ENCODE measurements at regions of chr11 and their contacts with region 1.

Region 1: GRCh38 chr11:38510041-38510440 is 1912.0 kb upstream of the RAG2 start:
- DNase-seq: no peak
- H3K4me3 ChIP-seq: no peak overlapping the region
- H3K27ac ChIP-seq: no peak overlapping the region
- H3K4me1 ChIP-seq: no peaks in the 10 kb centered on the region
- H3K27me3 ChIP-seq: no peaks in the 10 kb centered on the region
- CTCF ChIP-seq: no peak
- POLR2A ChIP-seq: no peak

Region 2: DNA sequence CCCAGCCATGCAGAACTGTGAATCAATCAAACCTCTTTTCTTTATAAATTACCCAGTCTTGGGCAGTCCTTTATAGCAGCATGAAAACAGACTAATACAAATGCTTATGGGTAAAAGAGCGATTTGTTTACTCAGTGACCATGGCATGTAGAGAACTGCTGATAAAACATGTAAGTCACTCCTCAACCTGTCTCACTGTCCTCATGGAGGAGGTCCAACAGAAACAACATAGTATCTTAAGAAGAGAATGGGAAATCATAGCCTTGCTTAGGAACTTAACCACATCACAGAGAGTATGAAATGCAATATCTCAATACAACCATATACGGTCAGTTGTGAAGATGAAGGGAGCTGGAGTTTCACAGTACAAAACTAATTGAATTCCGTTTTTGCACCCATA is 178.0 kb before region 1 on chr11:
- intact Hi-C with region 1: no loop called
- DNase-seq: no peak
- H3K4me3 ChIP-seq: no peak overlapping the region
- H3K27ac ChIP-seq: no peak overlapping the region
- H3K4me1 ChIP-seq: no peaks in the 10 kb centered on the region
- H3K27me3 ChIP-seq: no peaks in the 10 kb centered on the region
- CTCF ChIP-seq: no peak
- POLR2A ChIP-seq: no peak

Region 3: DNA sequence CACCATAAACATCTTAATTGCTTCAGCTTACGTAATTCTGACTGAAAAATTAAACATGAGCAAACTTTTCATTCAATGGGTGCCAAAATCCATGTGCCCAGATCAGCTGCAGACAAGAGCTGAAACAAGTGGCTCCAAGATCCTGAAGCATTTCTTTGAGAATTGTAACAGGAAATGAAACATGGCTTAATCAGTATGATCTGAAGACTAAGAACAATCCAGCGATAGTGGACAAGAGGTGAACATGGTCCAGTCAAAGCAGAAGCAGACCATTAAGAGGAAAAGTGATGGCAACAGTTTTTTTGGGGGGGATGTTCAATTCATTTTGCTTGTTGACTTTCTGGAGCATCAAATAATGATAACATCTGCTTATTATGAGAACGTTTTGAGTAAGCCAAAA is 52.5 kb after region 1 on chr11:
- intact Hi-C with region 1: loop called (anchors 2 kb)
- DNase-seq: no peak
- H3K4me3 ChIP-seq: no peak overlapping the region
- H3K27ac ChIP-seq: no peak overlapping the region
- H3K4me1 ChIP-seq: no peaks in the 10 kb centered on the region
- H3K27me3 ChIP-seq: no peaks in the 10 kb centered on the region
- CTCF ChIP-seq: no peak
- POLR2A ChIP-seq: no peak